HEK293T (cell line): ENCODE measurements at regions of chr6 and their contacts with region 1.

Region 1: DNA sequence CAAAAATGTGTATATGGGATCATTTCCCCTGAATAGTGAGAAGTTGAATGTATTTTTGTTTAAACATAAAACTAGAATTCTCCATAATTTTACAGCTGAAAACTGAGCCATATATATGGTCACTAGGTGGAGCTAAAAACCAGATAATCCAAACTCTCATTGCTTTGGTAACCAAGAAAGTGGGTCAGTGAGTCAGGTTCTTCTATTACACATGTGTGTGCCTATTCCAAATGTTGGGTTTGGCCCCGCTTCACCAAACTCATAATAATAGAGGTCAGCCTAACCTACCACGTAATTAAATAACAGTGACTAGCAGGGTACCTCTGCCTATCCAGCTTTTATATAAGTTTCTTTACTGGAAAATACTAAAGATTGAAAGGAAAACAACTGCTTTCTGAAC is 19.3 kb upstream of the RNGTT start:
- DNase-seq: peak; percentile 47

Region 2: DNA sequence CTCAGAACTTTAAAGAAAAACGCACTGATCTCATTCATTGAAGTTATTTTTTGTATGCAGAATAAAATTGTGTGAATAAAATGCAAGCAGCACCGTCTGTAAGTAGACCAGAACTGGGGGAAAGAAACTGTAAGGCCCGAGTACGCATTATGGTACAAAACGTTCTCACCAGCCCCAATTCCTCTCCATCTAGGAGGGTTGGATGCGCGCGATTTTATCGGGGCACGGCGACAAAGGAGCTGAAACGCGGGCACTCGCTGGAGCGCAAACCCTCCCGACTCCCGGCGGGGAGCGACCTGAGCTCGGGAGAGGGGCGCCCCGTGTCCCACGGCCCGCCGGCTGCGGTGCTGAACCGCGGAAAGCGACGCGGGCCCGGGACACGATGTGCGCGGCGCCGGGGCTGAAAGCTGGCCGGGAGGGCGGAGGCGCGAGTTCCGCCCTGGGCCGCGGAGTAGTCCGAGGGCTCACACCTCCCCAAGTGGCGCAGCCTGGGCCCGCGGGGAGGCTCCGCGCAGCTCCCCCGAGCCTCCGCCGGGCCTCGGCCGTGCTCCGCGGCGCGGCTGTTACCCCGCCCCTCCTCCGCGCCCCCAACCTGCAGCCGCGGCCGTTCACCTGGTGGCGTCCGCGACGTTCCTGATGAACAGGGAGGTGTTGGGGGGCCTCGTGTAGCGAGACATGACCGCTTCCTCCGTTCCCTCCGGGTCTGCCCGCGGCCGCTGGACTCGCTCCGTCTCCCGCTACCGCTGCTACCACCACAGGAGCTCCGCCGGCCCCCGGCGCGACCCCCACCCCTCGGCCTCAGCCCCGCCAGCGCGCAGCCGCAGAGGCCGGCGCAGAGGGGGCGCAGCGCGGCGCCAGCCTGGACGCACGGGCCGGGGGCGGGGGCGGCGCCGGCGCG is 134.7 kb after region 1 on chr6 and contains the start of gene SRSF12:
- CTCF ChIA-PET with region 1: interaction called, 10 read pairs
- POLR2A ChIA-PET with region 1: no interaction called
- DNase-seq: peak; percentile 70